ENCODE measurements at regions of chr2 and their contacts with region 1.

Region 1: GRCh38 chr2:196783431-196784094 is 15.9 kb downstream of the GTF3C3 start:
- DNase-seq: peak in 1 of 9 donors; percentile 48
- ATAC-seq: no peak
- H3K4me3 ChIP-seq: no peak overlapping the region
- H3K4me3 Mint-ChIP-seq: peak overlapping the region in 1 of 10 donors; percentile 1
- H3K27ac ChIP-seq: peak overlapping the region; percentile 10
- H3K27ac Mint-ChIP-seq: peak overlapping the region in 5 of 9 donors; percentile 6 to 68 (median 55)
- H3K4me1 ChIP-seq: no peaks in the 10 kb centered on the region
- H3K4me1 Mint-ChIP-seq: peaks cover 4 to 9% (median 6%) of the 10 kb centered on the region in 7 donors
- H3K27me3 ChIP-seq: no peaks in the 10 kb centered on the region
- H3K27me3 Mint-ChIP-seq: no peaks in the 10 kb centered on the region

Region 2: GRCh38 chr2:196239622-196240587 is 543.7 kb before region 1 on chr2:
- CTCF ChIA-PET with region 1: no interaction called
- POLR2A ChIA-PET with region 1: no interaction called
- intact Hi-C with region 1: no loop called
- DNase-seq: peak; percentile 33 to 90 (median 83)
- ATAC-seq: peak; percentile 87
- H3K4me3 ChIP-seq: peak overlapping the region; percentile 36
- H3K4me3 Mint-ChIP-seq: peak overlapping the region; percentile 64 to 87 (median 76)
- H3K27ac ChIP-seq: peak overlapping the region; percentile 71
- H3K27ac Mint-ChIP-seq: peak overlapping the region; percentile 90 to 99 (median 97)
- H3K4me1 ChIP-seq: peaks cover 57 to 60% of the 10 kb centered on the region in 2 donors
- H3K4me1 Mint-ChIP-seq: peaks cover 55 to 90% (median 80%) of the 10 kb centered on the region in 7 donors
- H3K27me3 ChIP-seq: no peaks in the 10 kb centered on the region
- H3K27me3 Mint-ChIP-seq: no peaks in the 10 kb centered on the region

Region 3: DNA sequence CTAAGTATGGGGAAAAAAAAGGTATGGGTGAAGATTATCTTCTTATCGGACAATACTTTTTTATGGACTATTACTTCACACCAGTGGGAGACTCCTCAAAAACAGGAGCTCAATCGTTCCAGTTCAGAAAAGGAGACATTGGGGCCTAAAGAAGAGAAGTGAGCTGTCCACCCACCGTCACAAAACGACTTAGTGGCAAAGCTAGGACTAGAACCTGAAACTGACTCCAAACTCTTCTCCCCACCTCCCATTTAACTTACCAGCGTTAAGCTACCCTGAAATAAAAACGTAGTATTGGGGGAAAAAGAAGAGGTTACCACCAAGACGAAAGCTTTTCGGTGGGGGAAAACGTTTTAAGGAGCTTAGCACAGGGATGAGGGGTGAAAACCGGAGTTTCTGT is 15.4 kb after region 1 on chr2:
- CTCF ChIA-PET with region 1: interaction called, 3 read pairs
- POLR2A ChIA-PET with region 1: interaction called, 11 read pairs
- intact Hi-C with region 1: no loop called
- DNase-seq: peak in 1 of 9 donors; percentile 1
- ATAC-seq: peak; percentile 1
- H3K4me3 ChIP-seq: peak overlapping the region; percentile 98
- H3K4me3 Mint-ChIP-seq: peak overlapping the region; percentile 85 to 99 (median 96)
- H3K27ac ChIP-seq: peak overlapping the region; percentile 73
- H3K27ac Mint-ChIP-seq: peak overlapping the region; percentile 89 to 99 (median 91)
- H3K4me1 ChIP-seq: peaks cover 4 to 6% of the 10 kb centered on the region in 2 donors
- H3K4me1 Mint-ChIP-seq: peaks cover 17 to 52% (median 38%) of the 10 kb centered on the region in 7 donors
- H3K27me3 ChIP-seq: no peaks in the 10 kb centered on the region
- H3K27me3 Mint-ChIP-seq: peaks cover 0 to 4% (median 4%) of the 10 kb centered on the region in 5 donors

Region 4: GRCh38 chr2:197399887-197400540 is 616.5 kb after region 1 on chr2:
- CTCF ChIA-PET with region 1: no interaction called
- POLR2A ChIA-PET with region 1: no interaction called
- intact Hi-C with region 1: loop called in 1 of 2 experiments (anchors 10 kb)
- DNase-seq: no peak
- ATAC-seq: no peak
- H3K4me3 ChIP-seq: no peak overlapping the region
- H3K4me3 Mint-ChIP-seq: no peak overlapping the region
- H3K27ac ChIP-seq: no peak overlapping the region
- H3K27ac Mint-ChIP-seq: peak overlapping the region in 1 of 9 donors; percentile 34
- H3K4me1 ChIP-seq: no peaks in the 10 kb centered on the region
- H3K4me1 Mint-ChIP-seq: peaks cover 0 to 5% (median 2%) of the 10 kb centered on the region in 7 donors
- H3K27me3 ChIP-seq: no peaks in the 10 kb centered on the region
- H3K27me3 Mint-ChIP-seq: no peaks in the 10 kb centered on the region

Region 5: DNA sequence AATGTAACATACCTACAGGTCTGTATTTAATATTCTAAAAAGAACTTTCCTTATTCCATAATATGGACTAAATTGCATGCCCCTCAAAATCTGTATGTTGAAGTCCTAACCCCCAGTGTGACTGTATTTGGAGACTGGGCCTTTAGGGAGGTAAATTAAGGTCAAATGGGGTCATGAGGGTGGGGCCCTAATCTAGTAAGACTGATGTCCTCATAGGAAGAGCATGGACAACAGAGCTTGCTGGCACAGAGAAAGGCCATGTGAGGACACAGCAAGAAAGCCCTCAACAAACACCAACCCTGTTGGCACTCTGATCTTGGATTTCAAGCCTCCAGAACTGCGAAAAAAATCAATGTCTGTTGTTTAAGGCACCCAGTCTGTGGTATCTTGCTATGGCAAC is 632.7 kb after region 1 on chr2:
- CTCF ChIA-PET with region 1: no interaction called
- POLR2A ChIA-PET with region 1: no interaction called
- intact Hi-C with region 1: loop called in 1 of 2 experiments (anchors 10 kb)
- DNase-seq: no peak
- ATAC-seq: no peak
- H3K4me3 ChIP-seq: no peak overlapping the region
- H3K4me3 Mint-ChIP-seq: no peak overlapping the region
- H3K27ac ChIP-seq: no peak overlapping the region
- H3K27ac Mint-ChIP-seq: peak overlapping the region in 2 of 9 donors; percentile 17 to 59
- H3K4me1 ChIP-seq: peaks cover 0 to 4% of the 10 kb centered on the region in 2 donors
- H3K4me1 Mint-ChIP-seq: peaks cover 9 to 26% (median 15%) of the 10 kb centered on the region in 7 donors
- H3K27me3 ChIP-seq: no peaks in the 10 kb centered on the region
- H3K27me3 Mint-ChIP-seq: no peaks in the 10 kb centered on the region

Region 6: DNA sequence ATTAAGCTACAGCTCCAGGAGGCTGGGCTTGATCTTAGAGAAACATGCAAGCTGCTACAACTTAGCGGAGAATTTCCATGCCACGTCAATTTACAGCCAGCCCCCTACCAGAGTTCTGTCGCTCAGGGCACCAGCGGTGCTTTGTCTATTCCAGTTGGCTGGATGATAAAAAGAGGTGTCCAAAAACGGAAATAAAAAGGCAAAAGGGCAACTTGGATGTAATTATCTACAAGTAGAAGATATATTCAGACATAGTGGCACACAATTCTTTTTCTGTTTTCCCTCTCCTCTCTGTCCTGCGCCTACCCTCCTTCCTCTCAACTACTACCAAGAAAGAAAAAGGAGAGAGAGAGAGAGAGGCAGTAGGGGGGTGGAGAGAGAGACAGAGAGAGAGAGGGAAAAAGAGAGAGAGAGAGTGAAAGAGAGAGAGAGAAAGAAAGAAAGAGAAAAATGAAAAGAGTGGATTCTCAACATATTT is 892.2 kb after region 1 on chr2:
- CTCF ChIA-PET with region 1: no interaction called
- POLR2A ChIA-PET with region 1: no interaction called
- intact Hi-C with region 1: no loop called
- DNase-seq: no peak
- ATAC-seq: no peak
- H3K4me3 ChIP-seq: no peak overlapping the region
- H3K4me3 Mint-ChIP-seq: no peak overlapping the region
- H3K27ac ChIP-seq: no peak overlapping the region
- H3K27ac Mint-ChIP-seq: no peak overlapping the region
- H3K4me1 ChIP-seq: no peaks in the 10 kb centered on the region
- H3K4me1 Mint-ChIP-seq: no peaks in the 10 kb centered on the region
- H3K27me3 ChIP-seq: peaks cover 6% of the 10 kb centered on the region in 2 donors
- H3K27me3 Mint-ChIP-seq: peaks cover 9 to 33% (median 14%) of the 10 kb centered on the region in 5 donors